PC-9 (cell line): ENCODE measurements at regions of chr3 and their contacts with region 1.

Region 1: GRCh38 chr3:193592944-193593667 is at the start of gene OPA1:
- DNase-seq: peak; percentile 98 to 99
- H3K4me3 ChIP-seq: peak within 1 kb of the TSS; percentile 89
- H3K27ac ChIP-seq: peak within 1 kb of the TSS; percentile 61
- H3K4me1 ChIP-seq: peaks cover 38% of the 10 kb centered on the region
- H3K27me3 ChIP-seq: no peaks in the 10 kb centered on the region
- CTCF ChIP-seq: no peak
- total RNA-seq, gene OPA1: 105 and 120 TPM in 2 replicates

Region 2: GRCh38 chr3:193225302-193226155 is 367.6 kb before region 1 on chr3:
- CTCF ChIA-PET with region 1: no interaction called
- POLR2A ChIA-PET with region 1: no interaction called
- intact Hi-C with region 1: no loop called
- DNase-seq: no peak
- H3K4me3 ChIP-seq: no peak overlapping the region
- H3K27ac ChIP-seq: no peak overlapping the region
- H3K4me1 ChIP-seq: no peaks in the 10 kb centered on the region
- H3K27me3 ChIP-seq: peaks cover 11% of the 10 kb centered on the region
- CTCF ChIP-seq: no peak

Region 3: DNA sequence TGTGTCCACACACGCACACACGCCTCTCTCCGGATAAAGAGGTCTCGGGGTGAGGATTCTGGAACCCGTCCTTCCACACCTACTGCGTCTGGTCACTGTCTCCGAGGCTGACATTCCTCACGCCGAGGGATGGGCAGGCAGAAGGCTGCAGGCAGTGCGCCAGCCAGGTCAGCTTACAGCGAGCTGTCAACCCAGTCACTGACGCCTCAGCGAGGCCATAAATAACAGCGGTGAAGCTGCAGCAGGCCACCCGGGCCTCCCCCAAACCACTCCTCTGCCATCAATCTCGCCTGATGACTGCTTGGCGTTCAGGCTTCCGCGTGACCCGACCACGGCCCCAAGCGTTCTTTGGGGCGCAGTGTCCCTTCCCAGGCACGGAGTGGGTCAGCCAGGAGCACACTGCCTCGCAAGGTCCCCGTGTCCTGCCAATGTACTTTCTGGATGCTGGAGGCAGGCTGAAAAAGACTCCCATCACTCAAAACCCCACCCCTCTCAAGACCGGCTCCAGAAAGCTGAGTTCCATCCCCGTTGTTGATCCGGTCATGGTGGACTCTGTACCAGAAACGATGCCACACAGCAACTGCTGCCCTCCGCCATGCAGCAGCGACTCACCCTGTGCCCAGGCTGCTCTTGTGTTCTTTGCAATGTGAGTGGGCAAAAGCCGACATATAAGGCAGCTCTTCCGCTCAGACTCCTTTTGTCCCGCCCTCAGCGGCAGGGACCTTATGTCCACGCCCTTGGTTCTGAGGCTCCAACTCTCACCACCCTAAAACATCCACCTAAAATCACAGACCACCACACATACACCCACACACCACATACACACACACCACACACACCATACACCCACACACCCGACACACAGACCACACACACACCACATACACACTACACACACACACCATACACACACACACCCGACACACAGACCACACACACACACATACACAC is 731.0 kb after region 1 on chr3:
- CTCF ChIA-PET with region 1: no interaction called
- POLR2A ChIA-PET with region 1: no interaction called
- intact Hi-C with region 1: loop called (anchors 5 kb)
- DNase-seq: peak; percentile 60 to 72
- H3K4me3 ChIP-seq: no peak overlapping the region
- H3K27ac ChIP-seq: peak overlapping the region; percentile 98
- H3K4me1 ChIP-seq: peaks cover 39% of the 10 kb centered on the region
- H3K27me3 ChIP-seq: no peaks in the 10 kb centered on the region
- CTCF ChIP-seq: no peak